GM12878 (cell line): ENCODE measurements at regions of chr19 and their contacts with region 1.

Region 1: GRCh38 chr19:7943444-7944176 is at the start of gene TIMM44:
- DNase-seq: peak; percentile 97
- ATAC-seq: peak; percentile 99
- H3K4me3 ChIP-seq: peak within 1 kb of the TSS; percentile 89
- H3K27ac ChIP-seq: peak within 1 kb of the TSS; percentile 77
- H3K4me1 ChIP-seq: peaks cover 7% of the 10 kb centered on the region
- H3K27me3 ChIP-seq: no peaks in the 10 kb centered on the region
- CTCF ChIP-seq: no peak
- EP300 ChIP-seq: 0 out of 4 replicates have a peak, but pooled peaks of 1 of the 2 experiments have one; percentile 10
- POLR2A ChIP-seq: peak; percentile 94
- RAD21 ChIP-seq: no peak
- polyA plus RNA-seq, gene TIMM44: 6.6 to 10.0 TPM

Region 2: GRCh38 chr19:7658219-7658686 is 285.4 kb before region 1 on chr19:
- CTCF ChIA-PET with region 1: no interaction called
- POLR2A ChIA-PET with region 1: no interaction called
- RAD21 ChIA-PET with region 1: no interaction called
- SMC1A ChIA-PET with region 1: no interaction called
- in situ Hi-C with region 1: no loop called
- intact Hi-C with region 1: no loop called
- DNase-seq: peak; percentile 79
- ATAC-seq: peak; percentile 100
- H3K4me3 ChIP-seq: peak overlapping the region; percentile 76
- H3K27ac ChIP-seq: peak overlapping the region; percentile 78
- H3K4me1 ChIP-seq: peaks cover 17% of the 10 kb centered on the region
- H3K27me3 ChIP-seq: no peaks in the 10 kb centered on the region
- CTCF ChIP-seq: no peak
- EP300 ChIP-seq: no peak
- POLR2A ChIP-seq: peak; percentile 41; the same call in 1 of the 2 replicates
- RAD21 ChIP-seq: no peak

Region 3: GRCh38 chr19:7919610-7920518 is 23.7 kb before region 1 on chr19 and contains the start of gene SNAPC2:
- CTCF ChIA-PET with region 1: interaction called, 32 read pairs
- POLR2A ChIA-PET with region 1: interaction called, 18 read pairs
- RAD21 ChIA-PET with region 1: interaction called, 17 read pairs
- SMC1A ChIA-PET with region 1: interaction called, 7 read pairs
- in situ Hi-C with region 1: no loop called
- intact Hi-C with region 1: no loop called
- DNase-seq: peak; percentile 70
- ATAC-seq: peak; percentile 86
- H3K4me3 ChIP-seq: peak within 1 kb of the TSS; percentile 82
- H3K27ac ChIP-seq: peak within 1 kb of the TSS; percentile 44
- H3K4me1 ChIP-seq: peaks cover 11% of the 10 kb centered on the region
- H3K27me3 ChIP-seq: peaks cover 8 to 21% of the 10 kb centered on the region in 2 experiments
- CTCF ChIP-seq: no peak
- EP300 ChIP-seq: no peak
- POLR2A ChIP-seq: peak; percentile 61; the same call in 1 of the 2 replicates
- RAD21 ChIP-seq: no peak
- polyA plus RNA-seq, gene SNAPC2: 0.19 to 1.0 TPM

Region 4: DNA sequence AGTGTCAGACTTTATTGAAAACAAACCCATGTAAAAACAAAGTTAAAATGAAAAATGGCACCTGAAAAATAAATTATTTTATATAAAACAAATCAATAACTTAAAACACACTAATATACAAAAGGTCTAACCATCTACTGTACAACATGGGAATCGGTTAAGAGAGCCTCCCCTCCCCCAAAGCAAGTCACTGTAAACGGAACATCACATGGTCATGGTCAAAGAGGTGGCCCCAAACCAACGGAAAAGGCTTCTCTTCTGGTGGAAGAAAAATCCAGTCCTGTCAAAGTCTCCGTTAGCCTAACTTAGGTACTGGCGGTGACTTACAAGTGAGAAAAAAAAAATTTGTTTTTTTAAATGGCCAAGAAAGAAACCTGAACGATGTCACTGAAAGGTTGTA is 15.6 kb after region 1 on chr19:
- CTCF ChIA-PET with region 1: interaction called, 16 read pairs
- POLR2A ChIA-PET with region 1: no interaction called
- RAD21 ChIA-PET with region 1: interaction called, 3 read pairs
- SMC1A ChIA-PET with region 1: no interaction called
- in situ Hi-C with region 1: no loop called
- intact Hi-C with region 1: no loop called
- DNase-seq: no peak
- ATAC-seq: no peak
- H3K4me3 ChIP-seq: no peak overlapping the region
- H3K27ac ChIP-seq: no peak overlapping the region
- H3K4me1 ChIP-seq: no peaks in the 10 kb centered on the region
- H3K27me3 ChIP-seq: no peaks in the 10 kb centered on the region
- CTCF ChIP-seq: no peak
- EP300 ChIP-seq: no peak
- POLR2A ChIP-seq: no peak
- RAD21 ChIP-seq: no peak

Region 5: DNA sequence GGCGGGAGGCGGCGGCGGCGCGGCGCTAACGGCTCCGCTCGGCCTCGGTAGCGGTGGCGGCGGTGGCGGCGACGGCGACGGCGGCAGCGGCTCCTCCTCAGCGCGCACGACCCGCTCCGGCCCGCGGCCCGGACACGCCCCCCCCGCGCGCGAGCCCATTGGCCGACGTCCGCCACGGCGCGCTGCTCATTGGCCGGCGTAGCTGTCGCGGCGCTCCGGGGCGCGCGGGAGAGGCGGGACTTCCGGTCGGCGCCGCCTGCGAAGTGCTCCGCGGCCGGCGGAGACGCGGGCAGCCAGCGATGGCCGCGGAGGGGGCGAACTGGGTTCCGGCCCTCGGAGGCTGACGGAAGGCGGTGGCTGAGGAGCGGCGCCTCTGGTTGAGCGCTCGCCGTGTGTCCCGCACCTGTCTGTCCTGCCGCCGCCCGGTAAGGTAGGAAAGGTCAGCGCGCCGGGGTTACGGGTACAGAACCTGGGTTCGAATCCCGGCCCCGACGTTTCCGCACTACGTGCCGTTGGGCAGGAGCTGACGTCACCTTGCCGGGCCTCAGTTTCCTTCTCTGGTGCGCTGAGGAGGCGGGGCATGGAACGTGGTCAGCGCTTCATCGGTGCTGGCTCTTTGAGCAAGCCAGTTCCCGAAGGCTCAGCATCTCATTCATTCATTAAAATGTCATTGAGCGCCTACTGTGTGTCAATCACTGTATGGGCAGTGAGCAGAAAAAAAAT is 62.1 kb after region 1 on chr19 and contains the start of gene ELAVL1:
- CTCF ChIA-PET with region 1: interaction called, 55 read pairs
- POLR2A ChIA-PET with region 1: interaction called, 4 read pairs
- RAD21 ChIA-PET with region 1: interaction called, 16 read pairs
- SMC1A ChIA-PET with region 1: interaction called, 29 read pairs
- in situ Hi-C with region 1: no loop called
- intact Hi-C with region 1: loop called (anchors 1 kb)
- DNase-seq: no peak
- ATAC-seq: peak; percentile 88
- H3K4me3 ChIP-seq: peak within 1 kb of the TSS; percentile 92
- H3K27ac ChIP-seq: peak within 1 kb of the TSS; percentile 79
- H3K4me1 ChIP-seq: peaks cover 19% of the 10 kb centered on the region
- H3K27me3 ChIP-seq: no peaks in the 10 kb centered on the region
- CTCF ChIP-seq: no peak
- EP300 ChIP-seq: no peak
- POLR2A ChIP-seq: peak; percentile 98
- RAD21 ChIP-seq: no peak
- polyA plus RNA-seq, gene ELAVL1: 7.4 to 12.9 TPM

Region 6: GRCh38 chr19:8252922-8253589 is 309.4 kb after region 1 on chr19:
- CTCF ChIA-PET with region 1: interaction called, 5 read pairs
- POLR2A ChIA-PET with region 1: no interaction called
- RAD21 ChIA-PET with region 1: interaction called, 5 read pairs
- SMC1A ChIA-PET with region 1: no interaction called
- in situ Hi-C with region 1: loop called (anchors 10 kb)
- intact Hi-C with region 1: loop called (anchors 2 kb)
- DNase-seq: peak; percentile 48
- ATAC-seq: peak; percentile 98
- H3K4me3 ChIP-seq: no peak overlapping the region
- H3K27ac ChIP-seq: no peak overlapping the region
- H3K4me1 ChIP-seq: no peaks in the 10 kb centered on the region
- H3K27me3 ChIP-seq: no peaks in the 10 kb centered on the region
- CTCF ChIP-seq: peak; percentile 86 to 98 (median 87); a peak in 5 of 6 replicates
- EP300 ChIP-seq: no peak
- POLR2A ChIP-seq: no peak
- RAD21 ChIP-seq: peak; percentile 99